MCF 10A (cell line): ENCODE measurements at regions of chr10 and their contacts with region 1.

Region 1: DNA sequence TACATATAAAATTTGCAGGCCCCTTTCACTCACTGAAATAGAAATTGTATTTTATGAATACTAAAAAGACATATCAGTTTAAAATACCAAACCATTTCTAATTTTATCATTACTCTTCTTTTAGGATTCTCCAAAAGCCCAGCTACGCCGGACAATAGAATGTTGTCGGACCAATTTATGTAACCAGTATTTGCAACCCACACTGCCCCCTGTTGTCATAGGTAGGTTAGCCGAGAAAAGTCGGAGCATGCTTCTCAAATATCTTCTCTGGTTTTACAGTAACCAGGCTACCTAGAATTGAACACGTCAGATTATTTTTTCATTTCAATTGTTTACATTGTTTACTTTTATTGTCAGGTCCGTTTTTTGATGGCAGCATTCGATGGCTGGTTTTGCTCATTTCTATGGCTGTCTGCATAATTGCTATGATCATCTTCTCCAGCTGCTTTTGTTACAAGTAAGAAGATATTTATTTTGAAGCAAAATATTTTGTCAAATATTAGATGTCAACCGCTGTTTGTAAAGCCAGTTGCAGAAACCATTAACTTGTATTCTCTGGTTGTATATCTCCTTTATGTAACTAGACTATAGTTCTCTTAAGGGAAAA is 57.6 kb downstream of the MMRN2 start:
- DNase-seq: peak; percentile 75
- H3K4me3 Mint-ChIP-seq: no peak overlapping the region
- H3K27ac Mint-ChIP-seq: no peak overlapping the region
- H3K4me1 Mint-ChIP-seq: no peaks in the 10 kb centered on the region
- H3K27me3 Mint-ChIP-seq: no peaks in the 10 kb centered on the region
- CTCF ChIP-seq: peak; percentile 63

Region 2: DNA sequence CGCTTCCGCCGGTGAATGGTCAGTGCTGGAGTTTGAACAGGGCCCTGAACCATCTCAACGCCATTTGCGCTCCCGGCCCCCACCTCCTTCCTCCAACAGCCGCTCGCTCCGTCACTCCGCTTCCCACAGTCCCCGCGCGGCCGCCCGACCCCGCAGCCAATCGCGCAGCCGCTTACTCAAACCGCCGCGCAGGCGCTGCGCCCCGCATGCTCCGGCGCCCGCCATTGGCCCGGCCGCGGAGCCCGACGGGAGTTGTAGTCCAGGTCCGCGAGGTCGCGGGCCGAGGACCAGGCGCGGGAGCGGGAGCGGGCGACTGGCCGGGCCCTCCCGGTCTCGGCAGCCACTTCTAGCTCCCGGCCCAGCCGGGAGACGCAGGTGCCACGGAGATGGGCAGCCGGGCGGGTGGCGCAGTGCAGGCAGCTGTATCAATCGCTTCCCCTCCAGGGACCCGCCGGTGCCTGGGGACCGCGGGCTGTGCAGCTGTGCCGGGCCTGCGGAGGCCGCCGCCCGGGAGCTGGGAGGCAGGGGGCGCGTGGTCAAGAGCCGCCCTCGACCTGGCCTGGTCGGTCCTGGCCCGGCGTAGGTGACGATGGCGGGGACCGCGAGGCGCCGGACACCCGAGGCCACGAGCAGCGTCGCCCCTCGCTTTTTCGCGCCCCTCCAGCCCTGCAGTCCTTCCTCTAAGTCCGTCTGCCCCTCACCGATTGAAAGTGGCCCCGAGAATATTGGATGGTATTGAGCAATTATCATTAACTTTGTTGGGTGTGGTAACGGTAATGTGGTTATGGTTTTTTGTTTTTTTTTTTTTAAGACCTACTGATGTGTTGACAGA is 377.9 kb before region 1 on chr10 and contains the start of gene WAPL:
- CTCF ChIA-PET with region 1: no interaction called
- POLR2A ChIA-PET with region 1: no interaction called
- intact Hi-C with region 1: loop called (anchors 5 kb)
- DNase-seq: peak; percentile 91
- H3K4me3 Mint-ChIP-seq: peak within 1 kb of the TSS; percentile 98
- H3K27ac Mint-ChIP-seq: peak within 1 kb of the TSS; percentile 93
- H3K4me1 Mint-ChIP-seq: peaks cover 42% of the 10 kb centered on the region
- H3K27me3 Mint-ChIP-seq: no peaks in the 10 kb centered on the region
- CTCF ChIP-seq: no peak
- total RNA-seq, gene WAPL: 42.7 and 45.2 TPM in 2 replicates

Region 3: GRCh38 chr10:86648706-86649427 is 250.9 kb before region 1 on chr10:
- CTCF ChIA-PET with region 1: no interaction called
- POLR2A ChIA-PET with region 1: no interaction called
- intact Hi-C with region 1: loop called (anchors 5 kb)
- DNase-seq: peak; percentile 96
- H3K4me3 Mint-ChIP-seq: no peak overlapping the region
- H3K27ac Mint-ChIP-seq: no peak overlapping the region
- H3K4me1 Mint-ChIP-seq: peaks cover 28% of the 10 kb centered on the region
- H3K27me3 Mint-ChIP-seq: no peaks in the 10 kb centered on the region
- CTCF ChIP-seq: no peak

Region 4: GRCh38 chr10:86693721-86694369 is 205.9 kb before region 1 on chr10:
- CTCF ChIA-PET with region 1: interaction called, 54 read pairs
- POLR2A ChIA-PET with region 1: no interaction called
- intact Hi-C with region 1: loop called (anchors 1 kb)
- DNase-seq: peak; percentile 55
- H3K4me3 Mint-ChIP-seq: no peak overlapping the region
- H3K27ac Mint-ChIP-seq: no peak overlapping the region
- H3K4me1 Mint-ChIP-seq: no peaks in the 10 kb centered on the region
- H3K27me3 Mint-ChIP-seq: no peaks in the 10 kb centered on the region
- CTCF ChIP-seq: peak; percentile 42

Region 5: GRCh38 chr10:86755740-86756510 is 143.8 kb before region 1 on chr10:
- CTCF ChIA-PET with region 1: interaction called, 8 read pairs
- POLR2A ChIA-PET with region 1: interaction called, 4 read pairs
- intact Hi-C with region 1: loop called (anchors 5 kb)
- DNase-seq: peak; percentile 67
- H3K4me3 Mint-ChIP-seq: peak overlapping the region; percentile 84
- H3K27ac Mint-ChIP-seq: peak overlapping the region; percentile 84
- H3K4me1 Mint-ChIP-seq: peaks cover 42% of the 10 kb centered on the region
- H3K27me3 Mint-ChIP-seq: no peaks in the 10 kb centered on the region
- CTCF ChIP-seq: no peak